Ascending aorta (tissue), 2 donors: ENCODE measurements at regions of chrX and their contacts with region 1.

Region 1: DNA sequence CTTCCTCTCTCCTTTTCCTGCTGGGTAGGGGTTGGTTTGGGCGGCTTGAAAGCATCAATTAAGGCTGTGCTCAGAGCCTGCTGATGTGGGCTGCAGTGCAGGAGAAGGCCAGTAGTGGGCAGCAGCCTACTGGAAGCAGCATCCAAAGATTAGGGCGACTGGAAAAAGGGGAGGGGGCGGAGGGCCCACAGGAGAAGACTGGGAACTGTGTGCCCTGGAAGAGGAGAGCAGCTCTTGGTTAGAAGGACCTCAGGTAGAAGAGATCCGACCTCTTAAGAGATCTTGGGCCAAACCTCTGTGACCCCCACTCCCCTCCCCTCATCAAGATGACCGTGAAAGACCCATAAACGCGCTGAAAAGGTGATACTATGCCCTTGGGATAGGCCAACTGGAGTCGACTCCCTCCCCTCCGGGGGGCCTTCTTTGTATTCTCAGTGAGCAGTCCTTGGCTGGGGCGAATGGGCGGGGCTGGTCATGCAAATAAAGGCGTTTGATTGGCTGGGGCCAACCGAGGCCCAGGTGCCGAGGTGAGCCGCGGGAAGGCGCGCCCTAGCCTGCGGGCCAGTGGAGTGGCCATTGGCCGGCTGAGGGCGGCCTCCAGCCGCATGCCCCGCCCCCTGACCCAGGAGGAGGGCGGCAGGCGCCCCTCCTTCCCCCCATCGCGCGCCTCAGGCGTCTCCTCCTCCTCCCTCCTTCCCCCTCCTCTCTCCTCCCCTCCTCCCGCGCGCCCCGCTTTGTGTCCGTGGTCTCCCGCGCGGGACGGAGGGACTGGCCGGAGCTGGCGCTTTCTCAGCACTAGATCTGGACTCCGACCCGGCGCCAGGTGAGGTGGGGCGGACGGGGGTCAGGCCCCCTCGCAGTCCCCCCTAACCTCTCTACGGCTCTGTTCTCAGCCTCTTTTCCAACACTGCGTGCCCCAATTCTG is 10.1 kb downstream of the DLG3 start:
- DNase-seq: peak; percentile 28 to 81
- H3K4me3 ChIP-seq: peak overlapping the region; percentile 51 to 63
- H3K27ac ChIP-seq: peak overlapping the region; percentile 84 to 95
- H3K4me1 ChIP-seq: no peaks in the 10 kb centered on the region
- H3K27me3 ChIP-seq: no peaks in the 10 kb centered on the region
- CTCF ChIP-seq: peak; percentile 54 to 84 (median 84)

Region 2: DNA sequence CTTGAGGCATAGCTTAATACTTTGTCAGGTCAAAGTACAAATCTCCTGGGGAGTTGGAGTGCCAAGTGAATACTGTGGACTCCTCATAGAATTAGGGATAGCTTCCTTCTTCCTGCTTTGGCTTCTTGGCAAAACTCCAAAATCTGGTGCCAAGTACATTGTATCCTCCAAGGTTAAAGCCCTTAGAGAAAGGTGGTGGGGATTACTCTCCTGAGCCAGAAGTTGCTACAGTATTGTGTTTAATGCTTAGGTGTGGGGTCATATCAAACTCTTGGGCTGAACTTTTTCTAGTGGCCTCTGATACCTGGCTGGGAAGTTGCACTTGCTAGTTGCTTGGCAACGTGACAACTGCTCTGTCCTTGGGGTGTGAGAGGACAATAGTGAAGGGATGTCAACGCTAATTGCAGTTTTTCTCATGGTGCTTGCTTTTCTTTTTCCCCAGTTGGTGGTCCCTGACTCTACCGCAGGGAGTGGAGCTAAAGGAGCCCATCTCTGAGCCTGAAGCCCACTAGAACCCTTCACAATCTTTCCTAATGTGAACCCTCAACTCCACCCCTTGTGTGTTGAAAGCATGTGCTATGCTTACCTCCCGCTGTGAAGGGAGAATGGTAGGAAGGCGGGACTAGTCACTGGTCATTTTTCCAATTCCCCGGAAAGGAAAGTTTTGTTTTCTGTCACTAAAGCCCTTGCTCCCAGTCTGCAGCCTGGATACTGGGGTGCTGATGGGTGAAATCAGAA is 25.4 kb after region 1 on chrX:
- intact Hi-C with region 1: loop called (anchors 2 kb)
- DNase-seq: no peak
- H3K4me3 ChIP-seq: peak overlapping the region in 1 of 2 donors; percentile 48
- H3K27ac ChIP-seq: peak overlapping the region; percentile 46 to 65
- H3K4me1 ChIP-seq: peaks cover 10 to 15% of the 10 kb centered on the region in 2 donors
- H3K27me3 ChIP-seq: no peaks in the 10 kb centered on the region
- CTCF ChIP-seq: no peak

Region 3: GRCh38 chrX:70554081-70554480 is 99.4 kb after region 1 on chrX:
- intact Hi-C with region 1: loop called (anchors 1 kb)
- DNase-seq: no peak
- H3K4me3 ChIP-seq: no peak overlapping the region
- H3K27ac ChIP-seq: no peak overlapping the region
- H3K4me1 ChIP-seq: no peaks in the 10 kb centered on the region
- H3K27me3 ChIP-seq: no peaks in the 10 kb centered on the region
- CTCF ChIP-seq: peak in 2 of 3 experiments; percentile 14 to 31